Gastrocnemius medialis (tissue), 4 donors: ENCODE measurements at regions of chr2 and their contacts with region 1.

Region 1: GRCh38 chr2:144824306-144825080 is 304.6 kb upstream of the ZEB2 start:
- DNase-seq: no peak
- ATAC-seq: no peak
- H3K4me3 ChIP-seq: no peak overlapping the region
- H3K27ac ChIP-seq: no peak overlapping the region
- H3K4me1 ChIP-seq: no peaks in the 10 kb centered on the region
- H3K27me3 ChIP-seq: no peaks in the 10 kb centered on the region
- CTCF ChIP-seq: no peak
- POLR2A ChIP-seq: no peak

Region 2: GRCh38 chr2:144836635-144837350 is 12.3 kb after region 1 on chr2:
- in situ Hi-C with region 1: no loop called
- intact Hi-C with region 1: loop called (anchors 1 kb)
- DNase-seq: no peak
- ATAC-seq: peak in 1 of 2 donors; percentile 44
- H3K4me3 ChIP-seq: no peak overlapping the region
- H3K27ac ChIP-seq: peak overlapping the region in 1 of 4 donors; percentile 15
- H3K4me1 ChIP-seq: no peaks in the 10 kb centered on the region
- H3K27me3 ChIP-seq: no peaks in the 10 kb centered on the region
- CTCF ChIP-seq: no peak
- POLR2A ChIP-seq: no peak